H1 (cell line): ENCODE measurements at regions of chr3 and their contacts with region 1.

Region 1: GRCh38 chr3:50121416-50122032 is 32.8 kb downstream of the RBM5 start:
- DNase-seq: peak; percentile 65 to 89
- H3K4me3 ChIP-seq: no peak overlapping the region
- H3K27ac ChIP-seq: no peak overlapping the region
- H3K4me1 ChIP-seq: peaks cover 4 to 27% (median 19%) of the 10 kb centered on the region in 4 experiments
- H3K27me3 ChIP-seq: no peaks in the 10 kb centered on the region
- CTCF ChIP-seq: peak in 2 of 3 experiments; percentile 94; a peak in 3 of 4 replicates
- EP300 ChIP-seq: no peak
- POLR2A ChIP-seq: no peak
- RAD21 ChIP-seq: peak; percentile 98

Region 2: DNA sequence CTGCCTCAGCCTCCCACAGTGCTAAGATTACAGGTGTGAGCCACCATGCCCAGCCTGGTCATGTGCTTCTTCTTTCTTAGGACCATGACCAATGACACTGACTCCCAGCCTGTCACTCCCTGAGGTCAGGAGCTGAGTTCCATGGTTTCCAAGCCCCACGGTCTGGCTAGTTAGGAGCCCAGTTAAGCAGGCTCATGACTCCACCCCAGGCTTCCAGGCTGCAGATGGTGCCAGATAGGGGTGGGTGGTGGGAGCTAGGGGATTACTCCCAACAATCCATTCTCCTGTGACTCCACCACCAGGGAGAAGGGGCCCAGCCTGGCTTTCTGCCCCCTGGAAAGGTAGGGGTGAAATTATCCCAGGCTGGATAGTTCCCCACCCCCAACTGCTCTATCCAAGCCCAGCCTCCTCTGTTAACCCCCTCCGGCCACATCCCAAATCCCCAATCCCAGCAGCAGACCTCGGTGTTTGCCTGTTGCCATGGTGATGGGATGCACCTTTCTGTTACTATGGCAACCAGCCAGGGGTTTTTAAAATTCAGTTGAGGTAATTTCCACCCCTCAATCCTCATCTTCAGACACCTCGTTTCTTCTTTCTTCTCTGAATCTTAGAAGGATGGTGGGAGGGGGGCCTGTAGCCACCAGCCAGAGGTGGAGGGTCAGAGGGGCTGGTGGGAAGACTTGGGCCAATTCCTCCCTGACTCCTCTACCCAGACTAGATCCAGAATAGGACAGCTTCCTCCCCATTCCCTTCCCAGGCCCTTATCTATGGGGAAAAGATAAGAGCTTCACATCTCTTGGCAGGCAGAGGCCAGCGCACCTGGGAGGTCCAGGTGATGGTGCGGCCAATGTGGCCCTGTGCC is 11.1 kb after region 1 on chr3:
- CTCF ChIA-PET with region 1: interaction called, 63 read pairs
- POLR2A ChIA-PET with region 1: interaction called, 133 read pairs
- DNase-seq: no peak
- H3K4me3 ChIP-seq: no peak overlapping the region
- H3K27ac ChIP-seq: 0 out of 2 replicates have a peak overlapping the region, but pooled peaks have one; percentile 32
- H3K4me1 ChIP-seq: peaks cover 0 to 9% (median 4%) of the 10 kb centered on the region in 4 experiments; a peak in 5 of 7 replicates
- H3K27me3 ChIP-seq: no peaks in the 10 kb centered on the region; a peak in 1 of 7 replicates
- CTCF ChIP-seq: no peak
- EP300 ChIP-seq: no peak
- POLR2A ChIP-seq: no peak
- RAD21 ChIP-seq: no peak

Region 3: GRCh38 chr3:50154840-50155474 is 33.4 kb after region 1 on chr3 and contains the start of gene SEMA3F:
- CTCF ChIA-PET with region 1: interaction called, 54 read pairs
- POLR2A ChIA-PET with region 1: interaction called, 65 read pairs
- DNase-seq: peak in 1 of 2 experiments; percentile 83
- H3K4me3 ChIP-seq: peak within 1 kb of the TSS; percentile 69 to 78 (median 72)
- H3K27ac ChIP-seq: no peak within 1 kb of the TSS
- H3K4me1 ChIP-seq: peaks cover 5 to 55% (median 40%) of the 10 kb centered on the region in 4 experiments
- H3K27me3 ChIP-seq: peaks cover 2 to 19% (median 15%) of the 10 kb centered on the region in 4 experiments; a peak in 6 of 7 replicates
- CTCF ChIP-seq: no peak; a peak in 1 of 4 replicates
- EP300 ChIP-seq: no peak
- POLR2A ChIP-seq: no peak
- RAD21 ChIP-seq: no peak; a peak in 1 of 4 replicates
- total RNA-seq, gene SEMA3F: 37.0 and 39.6 TPM in 2 replicates

Region 4: GRCh38 chr3:50170689-50171088 is 49.2 kb after region 1 on chr3:
- CTCF ChIA-PET with region 1: interaction called, 190 read pairs
- POLR2A ChIA-PET with region 1: interaction called, 34 read pairs
- DNase-seq: no peak
- H3K4me3 ChIP-seq: no peak overlapping the region
- H3K27ac ChIP-seq: no peak overlapping the region
- H3K4me1 ChIP-seq: peaks cover 0 to 22% (median 13%) of the 10 kb centered on the region in 4 experiments; a peak in 6 of 7 replicates
- H3K27me3 ChIP-seq: no peaks in the 10 kb centered on the region
- CTCF ChIP-seq: no peak
- EP300 ChIP-seq: no peak
- POLR2A ChIP-seq: no peak
- RAD21 ChIP-seq: no peak

Region 5: DNA sequence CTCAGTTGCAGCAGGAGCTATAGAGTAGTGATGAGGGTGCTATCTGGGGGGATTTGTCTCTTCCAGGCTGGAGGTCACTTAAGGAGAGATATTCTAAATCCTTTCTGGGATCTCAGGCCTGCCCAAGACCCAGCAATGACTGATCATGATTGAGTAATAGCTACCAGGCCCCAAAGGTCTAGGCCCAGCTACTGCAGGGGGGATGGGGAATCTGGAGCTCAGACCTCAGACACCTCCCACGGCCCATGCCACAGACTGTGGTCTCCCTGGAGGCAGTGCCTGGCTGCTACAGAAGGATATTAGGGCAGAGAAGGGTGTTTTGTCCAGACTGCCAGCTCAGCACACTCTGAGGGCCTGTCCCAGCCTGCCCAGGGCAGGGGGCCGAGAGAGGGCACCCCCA is 90.4 kb after region 1 on chr3:
- CTCF ChIA-PET with region 1: interaction called, 16 read pairs
- POLR2A ChIA-PET with region 1: interaction called, 3 read pairs
- DNase-seq: no peak
- H3K4me3 ChIP-seq: no peak overlapping the region
- H3K27ac ChIP-seq: no peak overlapping the region
- H3K4me1 ChIP-seq: peaks cover 0 to 23% (median 10%) of the 10 kb centered on the region in 4 experiments; a peak in 5 of 7 replicates
- H3K27me3 ChIP-seq: peaks cover 0 to 5% (median under 1%) of the 10 kb centered on the region in 4 experiments; a peak in 4 of 7 replicates
- CTCF ChIP-seq: no peak
- EP300 ChIP-seq: no peak
- POLR2A ChIP-seq: no peak
- RAD21 ChIP-seq: no peak